Activated CD8-positive, alpha-beta T cell treated with anti-CD3 and anti-CD28 coated beads for 36 hours (primary cell): ENCODE measurements at regions of chr20 and their contacts with region 1.

Region 1: GRCh38 chr20:3854462-3854871 is 7.8 kb downstream of the MAVS start:
- DNase-seq: no peak
- ATAC-seq: no peak
- H3K4me3 Mint-ChIP-seq: no peak overlapping the region
- H3K27ac Mint-ChIP-seq: peak overlapping the region; percentile 10
- H3K4me1 Mint-ChIP-seq: peaks cover 5% of the 10 kb centered on the region
- H3K27me3 Mint-ChIP-seq: no peaks in the 10 kb centered on the region
- CTCF ChIP-seq: no peak

Region 2: DNA sequence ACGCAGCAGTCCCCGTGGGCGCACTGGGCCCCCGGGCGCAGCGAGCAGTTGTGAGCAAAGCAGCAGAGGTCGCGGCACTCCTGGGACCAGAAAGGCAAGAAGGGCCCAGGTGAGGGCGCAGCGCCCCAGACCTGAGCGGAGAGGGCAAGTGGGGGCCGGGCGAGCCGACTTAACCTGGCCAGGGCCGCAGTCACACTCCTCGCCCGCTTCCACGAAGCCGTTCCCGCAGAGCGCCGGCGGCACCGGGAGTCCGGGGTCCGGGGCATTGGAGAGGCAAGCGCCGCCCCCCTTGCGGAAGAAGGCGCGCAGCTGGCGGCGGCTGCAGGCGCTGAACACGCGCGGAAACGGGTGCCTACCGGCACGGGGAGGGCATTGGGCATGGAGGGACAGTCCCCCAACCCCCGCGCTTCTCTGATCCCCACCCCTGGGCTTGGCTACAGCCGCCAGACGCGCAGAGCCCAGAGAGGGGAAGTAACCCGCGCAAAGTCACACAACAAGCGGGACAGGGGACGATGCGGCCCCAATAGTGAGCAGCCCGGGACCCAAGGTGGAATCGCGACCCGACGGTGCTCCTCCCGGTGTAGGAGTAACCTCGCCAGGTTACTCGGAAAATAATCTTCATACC is 181.8 kb before region 1 on chr20:
- CTCF ChIA-PET with region 1: interaction called, 10 read pairs
- POLR2A ChIA-PET with region 1: no interaction called
- intact Hi-C with region 1: no loop called
- DNase-seq: peak; percentile 23
- ATAC-seq: peak; percentile 28
- H3K4me3 Mint-ChIP-seq: no peak overlapping the region
- H3K27ac Mint-ChIP-seq: no peak overlapping the region
- H3K4me1 Mint-ChIP-seq: peaks cover 2% of the 10 kb centered on the region
- H3K27me3 Mint-ChIP-seq: peaks cover 43% of the 10 kb centered on the region
- CTCF ChIP-seq: no peak

Region 3: DNA sequence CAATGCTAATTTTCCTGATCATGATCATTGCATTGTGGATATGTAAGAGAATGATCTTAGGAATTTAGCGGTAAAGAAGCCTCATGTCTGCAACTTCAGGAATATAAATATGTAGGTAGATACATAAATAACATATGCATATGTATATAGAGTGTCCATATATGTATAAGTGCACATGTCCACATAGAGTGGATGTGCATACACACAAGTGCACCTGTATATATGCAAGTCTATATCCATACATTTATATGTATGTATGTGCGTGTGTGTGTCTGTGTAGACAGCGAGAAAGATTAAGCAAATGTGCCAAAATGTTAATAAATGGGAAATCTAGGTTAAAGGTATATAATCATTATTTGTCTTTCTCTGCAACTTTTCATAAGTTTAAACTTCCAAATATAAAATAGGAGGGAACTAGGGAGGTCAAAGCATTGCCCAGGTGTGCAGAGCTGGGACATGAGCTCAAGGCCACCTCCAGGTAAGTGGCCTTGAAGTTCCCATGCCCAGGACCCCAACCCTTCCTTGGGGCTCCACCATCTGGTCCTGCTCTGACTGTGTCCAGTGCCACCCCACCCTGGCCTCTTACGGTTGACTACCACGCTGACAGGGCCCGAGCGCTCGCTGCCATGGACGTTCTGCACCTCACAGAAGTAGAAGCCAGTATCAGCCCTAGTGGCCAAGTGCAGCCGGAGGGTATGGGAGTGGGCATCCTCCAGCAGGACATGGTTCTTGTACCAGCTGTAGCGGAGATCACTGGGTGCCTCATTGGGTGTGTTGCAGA is 151.7 kb before region 1 on chr20:
- CTCF ChIA-PET with region 1: no interaction called
- POLR2A ChIA-PET with region 1: no interaction called
- intact Hi-C with region 1: no loop called
- DNase-seq: no peak
- ATAC-seq: no peak
- H3K4me3 Mint-ChIP-seq: no peak overlapping the region
- H3K27ac Mint-ChIP-seq: no peak overlapping the region
- H3K4me1 Mint-ChIP-seq: no peaks in the 10 kb centered on the region
- H3K27me3 Mint-ChIP-seq: peaks cover 2% of the 10 kb centered on the region
- CTCF ChIP-seq: no peak

Region 4: GRCh38 chr20:3781153-3781910 is 73.1 kb before region 1 on chr20 and contains the start of gene SPEF1:
- CTCF ChIA-PET with region 1: interaction called, 25 read pairs
- POLR2A ChIA-PET with region 1: no interaction called
- intact Hi-C with region 1: loop called (anchors 5 kb)
- DNase-seq: peak; percentile 64
- ATAC-seq: peak; percentile 63
- H3K4me3 Mint-ChIP-seq: peak within 1 kb of the TSS; percentile 43
- H3K27ac Mint-ChIP-seq: no peak within 1 kb of the TSS
- H3K4me1 Mint-ChIP-seq: peaks cover 42% of the 10 kb centered on the region
- H3K27me3 Mint-ChIP-seq: peaks cover 14% of the 10 kb centered on the region
- CTCF ChIP-seq: no peak
- total RNA-seq, gene SPEF1: 0.23 TPM in 1 of 2 experiments, not detected in the other

Region 5: GRCh38 chr20:3786665-3787323 is 67.7 kb before region 1 on chr20 and contains the start of gene CENPB:
- CTCF ChIA-PET with region 1: interaction called, 25 read pairs
- POLR2A ChIA-PET with region 1: no interaction called
- intact Hi-C with region 1: loop called (anchors 5 kb)
- DNase-seq: peak; percentile 89
- ATAC-seq: peak; percentile 92
- H3K4me3 Mint-ChIP-seq: peak within 1 kb of the TSS; percentile 80
- H3K27ac Mint-ChIP-seq: peak within 1 kb of the TSS; percentile 85
- H3K4me1 Mint-ChIP-seq: peaks cover 37% of the 10 kb centered on the region
- H3K27me3 Mint-ChIP-seq: no peaks in the 10 kb centered on the region
- CTCF ChIP-seq: peak; percentile 95
- total RNA-seq, gene CENPB: 35.0 to 35.4 TPM

Region 6: GRCh38 chr20:3820048-3820900 is 34.2 kb before region 1 on chr20 and contains the start of gene AP5S1:
- CTCF ChIA-PET with region 1: interaction called, 13 read pairs
- POLR2A ChIA-PET with region 1: no interaction called
- intact Hi-C with region 1: no loop called
- DNase-seq: peak; percentile 97
- ATAC-seq: peak; percentile 79
- H3K4me3 Mint-ChIP-seq: peak within 1 kb of the TSS; percentile 92
- H3K27ac Mint-ChIP-seq: peak within 1 kb of the TSS; percentile 97
- H3K4me1 Mint-ChIP-seq: peaks cover 33% of the 10 kb centered on the region
- H3K27me3 Mint-ChIP-seq: no peaks in the 10 kb centered on the region
- CTCF ChIP-seq: peak; percentile 88
- total RNA-seq, gene AP5S1: 7.4 to 8.6 TPM

Region 7: DNA sequence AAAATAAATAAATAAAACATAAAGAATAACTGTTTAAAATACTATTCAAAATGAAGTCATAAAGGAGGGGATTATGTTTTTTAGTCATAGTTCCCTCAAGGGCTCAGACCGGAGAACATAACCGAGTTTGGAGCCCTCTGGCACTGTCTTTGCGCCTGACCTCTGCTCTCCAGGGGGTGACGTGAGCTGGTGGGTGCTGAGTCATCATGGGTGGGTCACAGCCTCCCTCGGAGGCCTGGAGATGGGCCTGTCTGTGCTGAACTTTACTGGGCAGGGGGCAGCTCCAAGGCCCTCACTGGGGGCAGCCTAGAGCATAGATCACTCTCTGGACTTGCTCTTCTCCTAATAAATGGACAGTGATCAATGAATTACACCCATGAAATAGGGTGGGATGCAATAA is 11.0 kb before region 1 on chr20:
- CTCF ChIA-PET with region 1: interaction called, 19 read pairs
- POLR2A ChIA-PET with region 1: interaction called, 4 read pairs
- intact Hi-C with region 1: no loop called
- DNase-seq: peak; percentile 23
- ATAC-seq: no peak
- H3K4me3 Mint-ChIP-seq: no peak overlapping the region
- H3K27ac Mint-ChIP-seq: no peak overlapping the region
- H3K4me1 Mint-ChIP-seq: peaks cover 12% of the 10 kb centered on the region
- H3K27me3 Mint-ChIP-seq: no peaks in the 10 kb centered on the region
- CTCF ChIP-seq: no peak

Region 8: DNA sequence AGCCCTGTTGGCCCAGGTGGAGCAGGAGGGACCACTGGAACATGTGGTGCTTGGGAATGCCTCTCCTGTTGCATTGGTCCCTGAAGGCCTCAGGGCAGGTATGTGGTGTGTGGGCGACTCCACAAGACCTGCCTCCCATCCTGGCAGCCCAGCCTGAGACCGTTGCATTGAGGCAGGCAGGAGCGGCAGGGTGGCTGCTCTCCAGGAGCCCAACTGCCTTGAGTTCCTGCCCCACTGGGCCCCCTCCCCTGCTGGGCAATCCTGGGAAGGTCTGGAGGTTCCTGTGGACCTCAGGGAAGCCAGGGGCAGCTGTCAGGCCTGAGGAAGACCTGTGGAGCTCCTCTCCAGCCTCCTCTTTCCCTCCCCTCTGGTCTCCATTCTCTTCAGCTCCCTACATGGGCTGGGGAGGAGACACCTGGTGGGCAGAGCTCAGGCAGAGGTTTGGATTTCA is 12.0 kb after region 1 on chr20:
- CTCF ChIA-PET with region 1: interaction called, 14 read pairs
- POLR2A ChIA-PET with region 1: no interaction called
- intact Hi-C with region 1: no loop called
- DNase-seq: no peak
- ATAC-seq: no peak
- H3K4me3 Mint-ChIP-seq: no peak overlapping the region
- H3K27ac Mint-ChIP-seq: no peak overlapping the region
- H3K4me1 Mint-ChIP-seq: no peaks in the 10 kb centered on the region
- H3K27me3 Mint-ChIP-seq: no peaks in the 10 kb centered on the region
- CTCF ChIP-seq: no peak